AG04450 (cell line): ENCODE measurements at regions of chr5 and their contacts with region 1.

Region 1: GRCh38 chr5:32709781-32710549 is 1.2 kb upstream of the NPR3 start:
- DNase-seq: no peak
- H3K4me3 ChIP-seq: peak overlapping the region; percentile 79
- H3K27ac ChIP-seq: peak overlapping the region; percentile 31
- H3K27me3 ChIP-seq: peaks cover 8% of the 10 kb centered on the region
- CTCF ChIP-seq: peak; percentile 82

Region 2: GRCh38 chr5:32562843-32563242 is 147.1 kb before region 1 on chr5:
- CTCF ChIA-PET with region 1: no interaction called
- POLR2A ChIA-PET with region 1: no interaction called
- DNase-seq: no peak
- H3K4me3 ChIP-seq: no peak overlapping the region
- H3K27ac ChIP-seq: no peak overlapping the region
- H3K27me3 ChIP-seq: no peaks in the 10 kb centered on the region
- CTCF ChIP-seq: no peak

Region 3: DNA sequence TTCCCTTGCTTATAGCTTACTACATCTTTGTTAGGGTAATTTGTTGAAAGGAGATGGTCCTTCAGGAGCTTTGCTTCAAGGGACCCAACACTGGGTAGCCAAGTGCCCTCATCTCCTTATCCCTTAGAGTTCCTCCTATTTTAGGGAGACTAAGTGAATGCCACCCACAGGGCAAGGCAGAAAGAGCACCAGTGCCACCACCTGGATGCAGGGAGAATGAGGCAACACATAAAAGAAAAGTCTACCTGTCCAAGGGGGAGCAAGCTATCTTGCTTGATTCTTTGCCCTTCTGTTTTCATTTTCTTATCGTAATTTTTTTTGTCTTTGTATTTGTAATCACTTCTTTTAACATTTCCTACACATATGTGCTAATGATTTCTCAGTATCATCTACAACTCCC is 206.7 kb after region 1 on chr5:
- CTCF ChIA-PET with region 1: interaction called, 19 read pairs
- POLR2A ChIA-PET with region 1: no interaction called
- DNase-seq: peak; percentile 2
- H3K4me3 ChIP-seq: no peak overlapping the region
- H3K27ac ChIP-seq: no peak overlapping the region
- H3K27me3 ChIP-seq: no peaks in the 10 kb centered on the region
- CTCF ChIP-seq: peak; percentile 71

Region 4: DNA sequence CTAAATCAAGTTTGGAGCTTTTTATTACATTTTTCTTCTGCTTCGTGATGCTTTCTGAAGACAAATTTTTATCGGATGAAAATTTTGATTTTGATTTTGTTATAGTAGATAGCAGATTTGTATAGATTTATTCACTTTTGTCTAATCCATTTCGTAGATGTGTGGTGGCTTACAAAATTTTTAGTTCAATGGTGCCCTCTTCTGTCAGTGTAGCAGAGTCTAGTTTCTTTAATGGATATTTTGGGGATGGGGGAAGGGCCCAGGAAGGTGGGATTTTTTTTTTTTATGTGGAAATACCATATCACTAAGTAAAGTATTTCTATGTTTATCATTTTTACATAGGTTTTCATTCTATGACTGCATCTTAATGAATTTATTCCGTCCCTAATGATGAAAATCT is 470.9 kb after region 1 on chr5:
- CTCF ChIA-PET with region 1: interaction called, 30 read pairs
- POLR2A ChIA-PET with region 1: no interaction called
- DNase-seq: peak; percentile 13
- H3K4me3 ChIP-seq: no peak overlapping the region
- H3K27ac ChIP-seq: no peak overlapping the region
- H3K27me3 ChIP-seq: no peaks in the 10 kb centered on the region
- CTCF ChIP-seq: peak; percentile 63

Region 5: DNA sequence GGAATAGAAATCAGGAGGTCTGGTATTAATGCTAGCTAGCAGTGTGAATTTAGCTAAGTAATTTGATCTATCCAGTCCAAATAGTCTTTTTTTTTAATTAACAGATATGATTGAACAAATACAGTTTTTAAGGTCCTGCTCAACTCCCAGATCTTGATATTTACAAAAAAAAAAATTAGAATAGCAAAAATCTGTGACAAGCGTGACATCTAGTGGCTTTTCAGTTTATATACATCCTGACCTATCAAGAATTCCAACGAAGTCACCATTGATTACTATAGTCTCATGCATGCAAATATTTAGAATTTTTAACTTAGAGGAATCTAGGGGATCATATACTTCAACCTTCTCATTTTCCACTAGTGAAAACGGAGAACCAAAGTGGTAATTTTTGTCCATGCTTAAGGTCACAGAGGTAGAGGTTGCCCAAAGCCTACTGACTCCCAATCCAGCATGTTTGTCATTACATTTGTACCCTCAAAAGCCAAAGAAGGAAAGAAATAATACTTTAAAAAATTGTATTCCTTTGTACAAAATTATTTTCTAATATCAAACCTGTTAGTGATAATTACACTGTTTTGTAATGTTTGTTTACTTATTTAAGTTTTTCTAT is 713.2 kb after region 1 on chr5:
- CTCF ChIA-PET with region 1: interaction called, 27 read pairs
- POLR2A ChIA-PET with region 1: no interaction called
- DNase-seq: no peak
- H3K4me3 ChIP-seq: no peak overlapping the region
- H3K27ac ChIP-seq: no peak overlapping the region
- H3K27me3 ChIP-seq: no peaks in the 10 kb centered on the region
- CTCF ChIP-seq: peak; percentile 40